ENCODE measurements at regions of chr21 and their contacts with region 1.

Region 1: GRCh38 chr21:34614633-34615486 is at the start of gene RCAN1:
- DNase-seq: peak; percentile 92
- ATAC-seq: peak; percentile 98
- H3K4me3 Mint-ChIP-seq: peak within 1 kb of the TSS; percentile 84
- H3K27ac Mint-ChIP-seq: peak within 1 kb of the TSS; percentile 87
- H3K4me1 Mint-ChIP-seq: peaks cover 22% of the 10 kb centered on the region
- H3K27me3 Mint-ChIP-seq: peaks cover 14% of the 10 kb centered on the region
- total RNA-seq, gene RCAN1: 7.8 to 8.1 TPM

Region 2: GRCh38 chr21:34510148-34511142 is 104.4 kb before region 1 on chr21:
- CTCF ChIA-PET with region 1: interaction called, 10 read pairs
- POLR2A ChIA-PET with region 1: no interaction called
- DNase-seq: peak; percentile 51
- ATAC-seq: peak; percentile 64
- H3K4me3 Mint-ChIP-seq: no peak overlapping the region
- H3K27ac Mint-ChIP-seq: no peak overlapping the region
- H3K4me1 Mint-ChIP-seq: no peaks in the 10 kb centered on the region
- H3K27me3 Mint-ChIP-seq: no peaks in the 10 kb centered on the region

Measured in activated CD8-positive, alpha-beta T cell treated with anti-CD3 and anti-CD28 coated beads, Interleukin-2, amount 10 ng/mL, durations not matched to agents 7 days and 5 days (primary cell).